Endothelial cell of umbilical vein (primary cell): ENCODE measurements at regions of chr7 and their contacts with region 1.

Region 1: GRCh38 chr7:44885394-44886317 is at the start of gene PURB:
- DNase-seq: peak; percentile 97
- H3K4me3 ChIP-seq: peak within 1 kb of the TSS; percentile 30 to 85 (median 78)
- H3K27ac ChIP-seq: peak within 1 kb of the TSS; percentile 91
- H3K4me1 ChIP-seq: peaks cover 42% of the 10 kb centered on the region
- H3K27me3 ChIP-seq: no peaks in the 10 kb centered on the region
- CTCF ChIP-seq: no peak
- POLR2A ChIP-seq: no peak
- total RNA-seq, gene PURB: 25.0 and 25.5 TPM in 2 replicates

Region 2: GRCh38 chr7:44858161-44858560 is 27.5 kb before region 1 on chr7:
- CTCF ChIA-PET with region 1: interaction called, 41 read pairs
- POLR2A ChIA-PET with region 1: interaction called, 8 read pairs
- dilution Hi-C with region 1: no loop called
- intact Hi-C with region 1: loop called (anchors 2 kb)
- DNase-seq: no peak
- H3K4me3 ChIP-seq: no peak overlapping the region
- H3K27ac ChIP-seq: no peak overlapping the region
- H3K4me1 ChIP-seq: no peaks in the 10 kb centered on the region
- H3K27me3 ChIP-seq: no peaks in the 10 kb centered on the region
- CTCF ChIP-seq: no peak
- POLR2A ChIP-seq: no peak

Region 3: DNA sequence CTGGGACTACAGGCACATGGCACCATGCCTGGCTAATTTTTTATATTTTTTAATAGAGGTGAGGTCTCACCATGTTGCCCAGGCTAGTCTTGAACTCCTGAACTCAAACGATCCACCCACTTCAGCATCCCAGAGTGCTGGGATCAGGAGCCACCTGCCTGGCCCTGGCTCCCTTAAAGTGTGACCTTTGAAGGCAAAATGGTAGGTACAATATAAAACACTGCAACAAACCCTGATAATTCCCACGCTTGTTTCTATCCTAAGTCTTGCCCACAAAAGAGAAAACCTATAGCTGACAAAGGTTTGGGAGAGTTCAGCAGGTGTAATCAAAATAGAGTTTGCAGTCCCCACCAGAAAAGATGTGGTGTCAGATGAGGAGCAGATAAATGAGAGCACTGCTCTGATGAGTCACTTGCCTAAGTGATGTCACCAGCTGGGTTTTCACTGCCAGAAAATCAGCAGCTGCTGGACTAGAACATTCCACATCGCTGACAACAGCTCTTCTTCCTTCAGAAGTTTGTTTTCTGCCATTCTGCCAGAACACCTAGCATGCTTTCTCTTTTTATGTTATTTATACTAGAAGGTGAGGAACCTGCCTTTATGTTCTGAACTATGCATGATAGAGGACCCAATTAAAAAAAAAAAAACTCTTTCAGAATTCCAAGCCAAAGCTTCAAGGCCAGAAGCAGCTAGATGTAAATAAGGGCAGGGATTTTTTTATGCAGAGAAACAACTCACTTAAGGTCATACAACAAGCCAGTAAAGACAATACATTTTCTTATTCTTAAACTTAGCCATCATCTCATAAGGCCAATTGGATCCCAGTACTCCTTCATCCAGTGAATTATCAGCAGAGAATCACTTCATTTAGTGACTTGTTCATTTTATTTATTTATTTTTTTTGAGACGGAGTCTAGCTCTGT is 18.3 kb before region 1 on chr7:
- CTCF ChIA-PET with region 1: interaction called, 7 read pairs
- POLR2A ChIA-PET with region 1: interaction called, 10 read pairs
- dilution Hi-C with region 1: no loop called
- intact Hi-C with region 1: no loop called
- DNase-seq: peak; percentile 60
- H3K4me3 ChIP-seq: no peak overlapping the region
- H3K27ac ChIP-seq: no peak overlapping the region
- H3K4me1 ChIP-seq: no peaks in the 10 kb centered on the region
- H3K27me3 ChIP-seq: no peaks in the 10 kb centered on the region
- CTCF ChIP-seq: no peak
- POLR2A ChIP-seq: no peak

Region 4: DNA sequence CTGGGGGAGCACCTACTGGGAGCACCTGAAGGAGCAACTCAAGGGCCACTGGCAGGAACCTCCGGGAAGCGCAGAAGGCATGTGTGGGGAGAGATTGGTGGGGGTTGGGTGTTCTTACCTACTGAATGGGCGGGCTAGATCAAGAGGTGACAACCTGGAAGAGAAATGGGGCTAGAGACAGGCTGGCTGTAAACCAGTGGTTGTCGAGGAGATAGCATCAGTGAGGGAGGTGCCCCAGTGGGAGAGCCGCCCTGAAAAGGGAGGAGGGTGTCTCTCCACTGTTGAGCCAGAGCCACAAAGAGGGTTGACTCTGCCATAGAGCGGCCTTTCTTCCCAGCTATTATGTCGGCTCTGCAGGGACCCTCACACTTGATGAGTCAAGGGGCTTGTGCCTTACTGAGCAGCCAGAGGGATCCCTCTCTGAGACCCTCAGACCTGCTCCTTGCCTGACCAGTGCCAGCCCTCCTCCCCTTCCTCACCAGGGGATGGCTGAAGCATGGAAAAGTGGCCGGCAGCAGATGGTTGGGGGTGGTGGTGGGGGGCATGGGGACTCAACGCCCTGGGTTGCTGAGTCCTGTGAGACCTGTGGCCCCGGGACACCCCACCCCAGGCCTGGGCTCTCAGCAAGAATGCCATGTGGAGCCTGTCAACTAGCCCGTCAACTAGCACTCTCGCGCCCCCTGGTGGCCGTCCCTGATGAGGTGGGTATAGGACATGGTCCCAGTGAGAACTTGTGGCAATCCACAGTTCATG is 36.1 kb after region 1 on chr7:
- CTCF ChIA-PET with region 1: interaction called, 4 read pairs
- POLR2A ChIA-PET with region 1: no interaction called
- dilution Hi-C with region 1: no loop called
- intact Hi-C with region 1: loop called (anchors 1 kb)
- DNase-seq: peak; percentile 69
- H3K4me3 ChIP-seq: no peak overlapping the region
- H3K27ac ChIP-seq: no peak overlapping the region
- H3K4me1 ChIP-seq: no peaks in the 10 kb centered on the region
- H3K27me3 ChIP-seq: peaks cover 0 to 3% of the 10 kb centered on the region in 2 experiments
- CTCF ChIP-seq: peak; percentile 75 to 91
- POLR2A ChIP-seq: no peak

Region 5: GRCh38 chr7:44999245-45000095 is 113.8 kb after region 1 on chr7:
- CTCF ChIA-PET with region 1: interaction called, 6 read pairs
- POLR2A ChIA-PET with region 1: interaction called, 3 read pairs
- dilution Hi-C with region 1: no loop called
- intact Hi-C with region 1: loop called (anchors 1 kb)
- DNase-seq: peak; percentile 100
- H3K4me3 ChIP-seq: peak overlapping the region; percentile 57 to 97 (median 96)
- H3K27ac ChIP-seq: peak overlapping the region; percentile 79
- H3K4me1 ChIP-seq: peaks cover 31% of the 10 kb centered on the region
- H3K27me3 ChIP-seq: no peaks in the 10 kb centered on the region
- CTCF ChIP-seq: no peak
- POLR2A ChIP-seq: peak; percentile 66

Region 6: GRCh38 chr7:45111298-45112223 is 225.9 kb after region 1 on chr7 and contains the start of gene TBRG4:
- CTCF ChIA-PET with region 1: no interaction called
- POLR2A ChIA-PET with region 1: no interaction called
- dilution Hi-C with region 1: no loop called
- intact Hi-C with region 1: loop called (anchors 1 kb)
- DNase-seq: peak; percentile 93
- H3K4me3 ChIP-seq: peak within 1 kb of the TSS; percentile 33 to 88 (median 64)
- H3K27ac ChIP-seq: peak within 1 kb of the TSS; percentile 57
- H3K4me1 ChIP-seq: peaks cover 8% of the 10 kb centered on the region
- H3K27me3 ChIP-seq: peaks cover 11 to 26% of the 10 kb centered on the region in 2 experiments
- CTCF ChIP-seq: peak in 1 of 2 donors; percentile 42
- POLR2A ChIP-seq: peak; percentile 82
- total RNA-seq, gene TBRG4: 56.7 and 63.4 TPM in 2 replicates